ENCODE measurements at regions of chr1 and their contacts with region 1.

Region 1: DNA sequence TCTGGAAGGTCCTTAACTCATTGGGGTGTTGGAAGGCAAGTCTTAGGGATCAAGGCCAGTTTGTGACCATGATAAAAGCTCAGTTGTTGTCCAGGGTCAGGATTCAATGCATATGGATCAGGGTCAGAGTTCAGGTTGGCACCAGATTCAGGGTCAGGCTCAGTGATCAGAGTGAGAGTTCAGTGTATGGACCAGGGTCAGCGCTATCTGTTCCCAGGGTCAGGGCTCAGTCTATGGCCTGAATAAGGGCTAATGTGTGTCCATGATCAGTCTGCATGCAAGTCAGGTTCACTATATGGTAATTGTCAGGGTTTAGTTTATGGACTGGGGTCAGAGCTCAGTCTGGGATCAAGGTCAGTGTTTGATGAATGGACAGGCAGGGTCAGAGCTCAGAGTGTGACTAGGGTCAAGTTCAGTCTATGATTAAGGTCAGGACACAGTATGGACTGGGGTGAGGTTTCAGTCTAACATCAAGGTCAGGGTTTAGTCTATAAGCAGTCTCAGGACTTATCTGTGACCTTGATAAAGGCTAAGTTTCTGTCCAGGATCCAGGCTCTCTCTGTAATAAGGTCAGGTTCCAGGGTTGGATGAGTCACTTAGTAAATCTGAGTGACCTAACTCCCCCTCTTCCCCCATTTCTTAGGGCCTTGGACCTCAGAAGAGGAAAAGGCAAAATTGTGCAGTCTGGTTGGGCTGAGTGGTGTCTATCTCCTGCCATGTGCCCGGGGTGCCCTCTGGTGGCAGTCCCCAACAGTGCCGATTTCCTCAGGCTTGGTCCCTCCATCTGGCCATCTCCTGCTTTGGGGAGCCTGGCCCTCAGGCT is 23.8 kb downstream of the KNCN start:
- DNase-seq: peak; percentile 71 to 86 (median 76)
- ATAC-seq: peak; percentile 68 to 88 (median 80)
- H3K4me3 ChIP-seq: no peak overlapping the region
- H3K27ac ChIP-seq: no peak overlapping the region
- H3K4me1 ChIP-seq: peaks cover 0 to 9% (median under 1%) of the 10 kb centered on the region in 12 donors
- H3K27me3 ChIP-seq: peaks cover 0 to 68% (median 17%) of the 10 kb centered on the region in 9 donors
- CTCF ChIP-seq: peak; percentile 82 to 94 (median 90)
- POLR2A ChIP-seq: no peak

Region 2: DNA sequence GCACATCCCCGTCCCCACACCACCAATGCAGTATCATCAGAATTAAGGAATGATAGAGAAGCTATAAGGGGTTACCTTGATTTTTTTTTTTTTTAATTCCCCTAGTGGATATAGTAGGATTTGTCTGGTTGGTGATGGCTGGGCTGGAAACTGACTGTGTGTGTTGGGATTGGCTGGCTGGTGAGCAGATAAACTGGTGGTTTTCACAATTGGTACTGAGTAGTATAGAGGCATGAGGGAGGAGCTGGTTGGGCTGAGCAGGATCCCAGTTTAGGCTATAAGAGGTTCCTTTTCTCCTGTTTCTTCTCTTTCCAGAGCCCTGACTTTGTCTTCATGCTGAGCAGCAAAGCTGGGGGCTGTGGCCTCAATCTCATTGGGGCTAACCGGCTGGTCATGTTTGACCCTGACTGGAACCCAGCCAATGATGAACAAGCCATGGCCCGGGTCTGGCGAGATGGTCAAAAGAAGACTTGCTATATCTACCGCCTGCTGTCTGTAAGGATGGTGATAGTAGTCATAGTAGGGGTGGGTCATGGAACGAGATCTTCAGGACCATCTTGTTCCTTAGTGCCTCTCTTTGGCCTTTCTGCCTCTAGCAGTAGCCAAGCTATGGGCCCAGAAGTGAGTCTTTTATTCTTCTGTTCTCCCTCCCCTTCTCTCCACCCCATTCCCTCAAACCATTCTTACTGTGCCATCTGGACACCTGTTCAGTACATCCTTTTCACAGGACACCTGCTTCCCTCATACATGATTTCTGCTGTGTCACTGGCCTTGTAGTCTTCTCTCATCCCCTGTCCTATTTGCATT is 253.3 kb before region 1 on chr1:
- intact Hi-C with region 1: no loop called
- DNase-seq: no peak
- ATAC-seq: peak in 1 of 4 donors; percentile 8
- H3K4me3 ChIP-seq: no peak overlapping the region
- H3K27ac ChIP-seq: no peak overlapping the region
- H3K4me1 ChIP-seq: no peaks in the 10 kb centered on the region
- H3K27me3 ChIP-seq: no peaks in the 10 kb centered on the region
- CTCF ChIP-seq: no peak
- POLR2A ChIP-seq: no peak

Region 3: GRCh38 chr1:46401964-46402626 is 125.6 kb before region 1 on chr1:
- intact Hi-C with region 1: loop called in 9 of 10 experiments (anchors 1 to 2 kb)
- DNase-seq: peak in 4 of 5 donors; percentile 40 to 60 (median 44)
- ATAC-seq: peak; percentile 40 to 78 (median 68)
- H3K4me3 ChIP-seq: no peak overlapping the region
- H3K27ac ChIP-seq: no peak overlapping the region
- H3K4me1 ChIP-seq: peaks cover 0 to 37% (median 6%) of the 10 kb centered on the region in 12 donors
- H3K27me3 ChIP-seq: no peaks in the 10 kb centered on the region
- CTCF ChIP-seq: no peak
- POLR2A ChIP-seq: no peak

Region 4: DNA sequence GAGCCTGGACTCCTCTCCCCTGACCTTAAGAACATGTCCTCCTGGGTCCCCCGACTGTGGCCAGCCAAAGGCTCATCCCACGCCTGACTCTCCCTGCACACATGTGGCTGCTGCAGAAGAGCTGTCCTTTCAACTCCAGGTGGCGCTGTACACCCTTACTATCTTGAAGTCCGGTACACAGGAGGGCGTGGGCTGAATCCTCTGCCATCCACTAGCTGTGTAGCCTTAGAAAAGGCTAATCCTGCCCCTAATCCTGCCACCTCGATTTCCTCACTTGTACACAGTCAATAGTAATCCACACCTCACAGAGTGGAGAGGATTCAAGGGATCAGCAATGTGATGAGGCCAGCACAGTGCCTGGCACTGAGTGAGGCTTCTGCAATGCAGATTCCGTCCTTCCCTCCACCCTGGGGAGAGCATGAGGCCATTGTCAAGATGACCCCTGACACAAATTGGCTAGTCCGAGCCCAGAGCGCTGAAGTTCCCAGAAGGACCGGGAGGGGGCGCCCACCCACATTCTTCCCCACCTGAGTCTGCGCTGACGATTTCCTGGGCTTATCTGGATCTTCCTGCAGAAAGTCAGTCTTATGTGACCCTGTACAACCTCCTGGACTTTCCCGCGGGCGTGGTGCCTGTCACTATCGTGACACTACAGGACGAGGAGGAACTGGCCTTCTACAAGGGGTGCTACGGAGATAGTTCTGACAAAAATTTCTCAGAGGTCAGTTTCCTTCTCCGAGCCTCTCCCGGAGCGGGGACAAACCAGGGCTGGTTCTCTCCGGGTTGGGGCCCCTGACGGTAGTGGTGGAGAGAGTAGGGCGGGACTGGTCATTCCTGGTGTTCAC is 85.1 kb before region 1 on chr1:
- intact Hi-C with region 1: loop called (anchors 1 to 2 kb)
- DNase-seq: peak; percentile 54 to 82 (median 70)
- ATAC-seq: peak; percentile 67 to 79 (median 75)
- H3K4me3 ChIP-seq: peak overlapping the region in 10 of 12 donors; percentile 17 to 58 (median 46)
- H3K27ac ChIP-seq: peak overlapping the region in 1 of 12 donors; percentile 43
- H3K4me1 ChIP-seq: peaks cover 0 to 15% (median 0%) of the 10 kb centered on the region in 12 donors
- H3K27me3 ChIP-seq: peaks cover 0 to 19% (median 6%) of the 10 kb centered on the region in 9 donors
- CTCF ChIP-seq: peak; percentile 80 to 94 (median 90)
- POLR2A ChIP-seq: no peak

Region 5: DNA sequence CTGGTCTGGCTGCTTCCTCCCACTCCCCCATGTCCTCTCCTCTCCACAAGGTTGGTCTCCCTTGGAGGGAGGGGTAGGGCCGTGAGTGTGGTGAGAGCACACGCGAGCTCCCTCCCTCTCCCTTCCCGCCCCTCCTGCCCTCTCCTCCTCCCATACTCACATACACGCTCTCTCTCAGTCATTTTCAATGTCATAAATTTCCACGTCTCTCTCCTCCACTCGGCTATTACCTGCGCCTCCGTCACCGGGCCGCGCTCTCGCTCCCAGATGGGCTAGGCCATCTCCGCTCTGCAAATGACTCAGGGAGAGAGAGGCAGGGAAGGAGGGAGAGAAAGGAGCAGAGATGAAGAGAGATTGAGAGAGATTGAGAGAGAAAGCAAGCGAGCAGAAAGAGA is 74.8 kb before region 1 on chr1:
- intact Hi-C with region 1: no loop called
- DNase-seq: peak in 1 of 5 donors; percentile 15
- ATAC-seq: no peak
- H3K4me3 ChIP-seq: no peak overlapping the region
- H3K27ac ChIP-seq: no peak overlapping the region
- H3K4me1 ChIP-seq: peaks cover 0 to 12% (median under 1%) of the 10 kb centered on the region in 12 donors
- H3K27me3 ChIP-seq: peaks cover 0 to 46% (median 9%) of the 10 kb centered on the region in 9 donors
- CTCF ChIP-seq: no peak
- POLR2A ChIP-seq: no peak

Region 6: DNA sequence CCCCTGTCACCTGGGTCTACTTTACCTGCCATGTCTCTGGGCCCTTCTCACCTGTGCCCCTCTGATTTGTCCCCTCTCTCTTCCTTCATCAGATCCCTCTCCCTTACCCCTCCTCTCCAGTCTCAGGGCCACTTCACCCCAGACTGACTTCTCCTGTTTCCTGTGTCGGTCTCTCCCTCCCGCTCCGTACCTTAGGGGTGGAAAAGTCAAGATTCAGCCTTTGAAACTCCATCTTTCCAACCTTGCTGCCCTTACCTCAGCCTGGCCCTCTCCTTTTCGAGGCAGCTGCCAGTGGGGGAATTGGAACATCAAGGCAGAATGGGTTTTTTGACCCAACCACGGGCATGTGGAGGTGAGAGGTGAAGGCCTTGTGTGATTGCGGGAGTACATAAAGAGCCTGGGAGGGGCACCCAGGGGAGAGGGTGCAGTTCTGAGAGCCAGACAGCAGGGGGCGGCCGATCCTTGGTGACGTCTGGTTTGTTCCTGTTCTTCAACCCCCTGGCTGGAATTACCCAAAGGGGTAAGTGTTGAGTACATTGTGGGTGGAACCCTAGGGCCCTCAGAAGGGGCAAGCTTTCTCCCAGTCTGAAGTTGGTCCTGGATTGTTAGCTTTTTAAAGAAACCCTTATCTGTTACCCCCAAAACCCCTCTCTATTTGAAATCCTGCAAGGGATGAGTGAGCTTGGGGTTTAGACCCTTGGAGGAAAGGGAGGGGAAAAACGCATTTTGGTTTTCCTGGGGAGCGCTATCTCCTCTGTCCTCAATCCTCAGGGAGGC is 50.3 kb before region 1 on chr1:
- intact Hi-C with region 1: loop called in 9 of 10 experiments (anchors 1 to 10 kb)
- DNase-seq: peak; percentile 52 to 83 (median 61)
- ATAC-seq: peak in 3 of 4 donors; percentile 66 to 86 (median 77)
- H3K4me3 ChIP-seq: no peak overlapping the region
- H3K27ac ChIP-seq: no peak overlapping the region
- H3K4me1 ChIP-seq: no peaks in the 10 kb centered on the region
- H3K27me3 ChIP-seq: peaks cover 0 to 81% (median 38%) of the 10 kb centered on the region in 9 donors
- CTCF ChIP-seq: peak; percentile 75 to 90 (median 83)
- POLR2A ChIP-seq: no peak

Region 7: DNA sequence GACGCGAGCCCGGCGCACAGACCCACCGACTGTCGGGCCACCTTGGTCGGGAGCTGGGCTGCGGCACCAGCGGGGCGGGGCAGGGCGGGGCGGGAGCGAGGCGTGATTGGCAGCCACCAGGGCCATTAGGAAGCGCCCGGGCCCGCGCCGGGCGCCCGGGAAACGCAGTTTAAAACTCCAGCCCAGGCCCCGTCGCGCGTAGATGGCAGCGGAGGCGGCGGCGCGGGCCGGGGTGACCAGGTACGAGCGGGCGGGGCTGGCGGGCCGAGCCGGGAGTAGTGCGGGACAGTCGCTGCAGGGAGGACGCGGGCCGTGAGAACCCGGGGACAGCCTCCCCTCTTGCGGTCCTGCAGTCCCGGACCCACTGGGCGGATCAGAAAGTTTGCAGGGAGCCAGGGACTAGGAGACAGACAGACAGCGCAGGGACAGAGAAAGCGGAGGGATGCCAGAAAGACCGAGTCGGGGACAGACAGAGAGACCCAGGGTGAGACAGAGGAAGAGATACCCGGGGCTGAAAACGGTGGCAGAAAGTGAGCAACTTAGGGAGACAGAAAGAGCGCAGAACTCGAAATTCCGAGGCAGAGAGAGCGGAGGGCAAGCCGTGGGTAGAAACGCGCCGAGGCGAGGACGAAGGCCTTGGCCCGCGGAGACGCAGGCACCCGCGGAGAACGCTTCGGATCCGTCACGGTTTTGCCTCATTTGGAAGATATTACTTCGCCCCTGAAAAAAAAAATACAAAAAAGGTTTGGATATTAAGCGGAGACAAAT is 37.9 kb before region 1 on chr1 and contains the start of gene DMBX1:
- intact Hi-C with region 1: no loop called
- DNase-seq: peak in 2 of 5 donors; percentile 29 to 54
- ATAC-seq: peak in 2 of 4 donors; percentile 20 to 68
- H3K4me3 ChIP-seq: peak within 1 kb of the TSS; percentile 20 to 46 (median 38)
- H3K27ac ChIP-seq: no peak within 1 kb of the TSS
- H3K4me1 ChIP-seq: peaks cover 0 to 28% (median 15%) of the 10 kb centered on the region in 12 donors
- H3K27me3 ChIP-seq: peaks cover 45 to 100% (median 97%) of the 10 kb centered on the region in 9 donors
- CTCF ChIP-seq: no peak
- POLR2A ChIP-seq: no peak
- total RNA-seq, gene DMBX1: not detected

Region 8: GRCh38 chr1:46940307-46940706 is 412.6 kb after region 1 on chr1:
- intact Hi-C with region 1: no loop called
- DNase-seq: no peak
- ATAC-seq: no peak
- H3K4me3 ChIP-seq: no peak overlapping the region
- H3K27ac ChIP-seq: no peak overlapping the region
- H3K4me1 ChIP-seq: no peaks in the 10 kb centered on the region
- H3K27me3 ChIP-seq: no peaks in the 10 kb centered on the region
- CTCF ChIP-seq: no peak
- POLR2A ChIP-seq: no peak

Measured in heart left ventricle (tissue), 16 donors.